ENCODE measurements at regions of chr10 and their contacts with region 1.

Region 1: GRCh38 chr10:7424315-7424714 is 13.5 kb upstream of the SFMBT2 start:
- DNase-seq: peak in 1 of 9 donors; percentile 16
- ATAC-seq: peak; percentile 65
- H3K4me3 ChIP-seq: no peak overlapping the region
- H3K4me3 Mint-ChIP-seq: no peak overlapping the region
- H3K27ac ChIP-seq: no peak overlapping the region
- H3K27ac Mint-ChIP-seq: peak overlapping the region in 4 of 9 donors; percentile 6 to 47 (median 23)
- H3K4me1 ChIP-seq: no peaks in the 10 kb centered on the region
- H3K4me1 Mint-ChIP-seq: peaks cover 5 to 24% (median 18%) of the 10 kb centered on the region in 7 donors
- H3K27me3 ChIP-seq: no peaks in the 10 kb centered on the region
- H3K27me3 Mint-ChIP-seq: peaks cover 0 to 34% (median 0%) of the 10 kb centered on the region in 5 donors

Region 2: DNA sequence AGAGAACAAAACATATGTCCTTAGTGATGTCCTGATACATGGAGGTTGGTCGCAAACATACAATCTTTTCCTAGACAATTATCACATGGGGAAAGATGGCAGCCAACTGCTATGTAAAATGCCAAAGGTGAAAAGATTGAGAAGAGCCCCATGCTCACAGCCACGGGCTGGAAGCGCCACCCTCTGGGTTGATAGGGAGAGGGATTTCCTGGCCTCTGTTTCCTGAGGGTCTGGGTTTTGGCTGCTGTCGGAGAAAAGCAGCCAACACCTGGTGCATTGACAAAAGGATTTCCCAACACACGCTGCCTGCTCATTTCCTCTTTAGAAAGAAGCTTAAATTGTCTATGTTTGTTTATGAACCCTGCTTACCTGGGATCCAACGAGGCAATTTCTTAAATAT is 198.7 kb after region 1 on chr10:
- CTCF ChIA-PET with region 1: no interaction called
- POLR2A ChIA-PET with region 1: no interaction called
- intact Hi-C with region 1: loop called in 1 of 2 experiments (anchors 1 kb)
- DNase-seq: peak in 3 of 9 donors; percentile 3 to 7 (median 5)
- ATAC-seq: no peak
- H3K4me3 ChIP-seq: no peak overlapping the region
- H3K4me3 Mint-ChIP-seq: no peak overlapping the region
- H3K27ac ChIP-seq: no peak overlapping the region
- H3K27ac Mint-ChIP-seq: no peak overlapping the region
- H3K4me1 ChIP-seq: no peaks in the 10 kb centered on the region
- H3K4me1 Mint-ChIP-seq: no peaks in the 10 kb centered on the region
- H3K27me3 ChIP-seq: no peaks in the 10 kb centered on the region
- H3K27me3 Mint-ChIP-seq: peaks cover 0 to 11% (median 0%) of the 10 kb centered on the region in 5 donors